AG04449 (cell line): ENCODE measurements at regions of chr18 and their contacts with region 1.

Region 1: DNA sequence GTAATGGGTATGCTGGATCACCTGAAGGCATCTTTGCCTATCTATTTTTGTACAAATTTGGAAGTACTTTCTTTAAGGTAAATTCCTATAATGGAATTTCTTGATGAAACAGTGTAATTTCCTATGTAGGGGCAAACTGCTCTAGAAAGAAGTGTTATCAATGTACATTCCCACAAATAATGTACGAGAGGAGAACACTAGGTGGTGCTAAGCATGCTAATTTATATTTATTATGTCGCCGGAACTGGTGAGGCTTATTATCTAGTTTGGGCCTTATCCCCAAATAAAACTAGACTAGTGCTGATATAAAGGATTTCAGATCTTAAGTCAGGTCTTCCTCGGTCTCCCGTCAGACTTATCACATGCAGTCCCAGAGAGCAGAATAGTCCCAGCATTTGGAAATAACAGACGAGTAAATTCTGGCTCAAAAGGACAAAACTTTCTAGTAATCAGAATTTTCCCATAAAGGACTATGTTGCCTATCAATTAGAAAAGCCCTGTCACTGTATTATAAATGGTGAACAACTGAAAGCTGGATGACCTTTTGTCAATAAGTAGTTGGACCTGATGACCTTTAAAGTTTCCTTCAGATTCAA is 86.9 kb upstream of the RBBP8 start:
- DNase-seq: no peak
- H3K4me3 ChIP-seq: no peak overlapping the region
- CTCF ChIP-seq: peak; percentile 27

Region 2: DNA sequence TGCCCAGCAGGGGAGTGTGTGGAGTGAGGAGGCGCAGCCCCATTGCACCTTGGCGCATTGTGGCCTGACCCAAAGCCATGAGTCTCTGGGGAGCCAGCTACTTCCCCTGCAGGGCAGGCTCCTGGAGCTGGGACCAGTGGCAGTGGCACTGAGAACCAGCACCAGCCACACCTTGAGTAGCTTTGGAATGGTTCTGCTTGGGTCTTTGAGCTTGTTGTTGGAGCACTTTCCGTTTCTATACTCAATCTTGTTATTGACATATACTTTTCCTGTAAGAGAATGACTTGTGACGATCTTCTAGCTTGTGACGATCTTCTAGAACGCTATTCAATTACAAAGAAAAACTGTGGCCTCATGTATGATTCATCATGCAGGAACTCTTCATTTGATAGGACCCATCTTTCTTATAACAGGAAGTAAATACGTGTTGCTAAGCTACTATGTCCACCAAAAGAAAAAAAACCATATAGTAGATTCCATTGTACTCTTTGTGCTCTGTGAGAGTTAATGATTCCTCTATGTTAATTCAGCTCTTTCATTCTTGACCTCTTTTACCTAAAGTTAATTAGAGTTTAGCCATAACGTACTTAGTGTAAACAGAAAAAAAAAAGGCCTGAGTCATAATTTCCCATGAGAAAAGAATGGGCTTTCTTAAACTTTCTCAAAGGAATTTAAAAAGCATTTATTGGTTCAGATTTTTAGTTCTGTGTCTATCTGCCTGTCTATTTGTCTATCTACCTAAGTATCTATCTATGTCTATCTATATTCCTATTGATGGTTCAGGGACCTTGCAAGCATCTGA is 563.7 kb before region 1 on chr18:
- CTCF ChIA-PET with region 1: no interaction called
- POLR2A ChIA-PET with region 1: no interaction called
- DNase-seq: peak; percentile 21
- H3K4me3 ChIP-seq: no peak overlapping the region
- CTCF ChIP-seq: no peak

Region 3: DNA sequence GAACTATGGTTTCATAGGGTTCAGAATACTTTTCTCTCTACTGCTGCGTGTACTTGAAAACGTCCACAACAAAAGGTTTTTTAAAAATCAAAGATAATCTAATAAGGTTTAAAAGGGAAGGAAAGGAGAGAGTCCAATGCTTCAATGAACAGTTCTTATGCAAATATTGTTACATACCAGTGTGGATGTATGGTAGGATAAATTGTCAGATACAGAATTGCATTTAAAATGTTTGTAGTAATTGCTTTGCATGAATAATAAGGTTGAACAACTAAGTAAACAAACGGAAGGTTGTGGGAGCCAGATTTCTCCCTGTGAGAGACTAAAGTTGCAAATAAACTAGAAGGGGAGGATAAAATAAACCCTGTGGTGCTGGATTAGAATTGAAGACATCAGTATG is 33.1 kb after region 1 on chr18:
- CTCF ChIA-PET with region 1: no interaction called
- POLR2A ChIA-PET with region 1: no interaction called
- DNase-seq: no peak
- H3K4me3 ChIP-seq: no peak overlapping the region
- CTCF ChIP-seq: no peak

Region 4: DNA sequence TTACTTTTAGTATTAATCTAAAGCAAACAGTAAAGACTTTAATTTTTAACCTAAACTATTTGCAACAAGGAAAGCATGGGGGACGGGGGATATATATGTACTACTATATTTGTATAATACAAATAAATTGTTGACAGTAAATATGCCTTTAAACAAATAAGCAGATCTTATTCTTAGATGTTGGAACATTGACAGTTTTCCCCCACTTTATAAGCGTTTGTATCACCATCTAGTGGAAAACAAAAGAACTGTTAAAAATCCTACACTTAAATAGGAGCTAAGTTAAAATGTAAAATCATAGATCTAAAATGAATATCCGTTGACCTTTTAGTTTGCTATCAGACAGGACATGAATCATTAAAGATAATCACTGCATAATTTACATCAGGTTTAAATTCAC is 137.0 kb after region 1 on chr18:
- CTCF ChIA-PET with region 1: interaction called, 12 read pairs
- POLR2A ChIA-PET with region 1: no interaction called
- DNase-seq: no peak
- H3K4me3 ChIP-seq: no peak overlapping the region
- CTCF ChIP-seq: peak; percentile 25